ENCODE measurements at regions of chr16 and their contacts with region 1.

Region 1: DNA sequence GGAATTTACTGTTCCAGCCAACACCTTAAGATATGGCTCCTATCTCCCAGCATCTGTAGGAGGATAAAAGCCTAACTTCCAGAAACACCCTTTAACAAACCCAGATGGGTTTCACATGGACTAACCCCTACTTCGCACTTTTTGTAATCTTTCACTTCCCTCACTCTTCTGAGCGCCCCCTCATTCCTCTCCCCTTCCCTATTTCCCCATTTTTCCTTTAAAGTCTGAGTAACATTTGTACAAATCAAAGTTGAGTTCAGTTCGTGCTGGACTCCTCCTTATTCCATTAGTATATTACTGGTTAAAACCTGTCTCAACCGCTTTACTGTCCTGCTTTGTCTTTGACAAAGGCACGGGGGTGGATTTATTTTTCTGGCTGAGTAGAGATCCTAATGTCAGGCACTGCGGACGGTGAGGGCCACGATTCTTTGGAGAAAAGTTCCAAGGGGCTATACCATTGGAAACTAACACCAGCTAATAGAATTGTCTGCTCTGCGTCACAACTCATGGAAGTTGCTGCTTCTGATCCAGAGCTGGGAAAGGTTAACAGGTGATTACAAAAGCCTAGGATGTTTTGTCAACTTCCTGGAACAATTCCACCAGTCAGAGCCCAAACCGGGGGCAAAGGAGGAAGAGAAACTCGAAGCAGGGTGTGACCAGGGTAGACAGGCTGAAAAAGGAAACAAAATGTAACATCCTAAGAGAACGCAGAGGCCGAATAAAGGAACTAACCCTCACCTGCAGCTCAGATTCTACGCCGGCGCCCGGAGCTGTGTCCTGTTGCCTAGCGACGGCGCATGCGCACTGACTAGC is 12.5 kb downstream of the TAT start:
- DNase-seq: peak in 1 of 9 experiments; percentile 8
- ATAC-seq: no peak
- H3K4me3 ChIP-seq: peak overlapping the region; percentile 64 to 66
- H3K4me3 Mint-ChIP-seq: peak overlapping the region; percentile 91
- H3K27ac ChIP-seq: peak overlapping the region; percentile 72 to 73
- H3K27ac Mint-ChIP-seq: peak overlapping the region; percentile 94
- H3K4me1 ChIP-seq: peaks cover 11% of the 10 kb centered on the region
- H3K4me1 Mint-ChIP-seq: peaks cover 15% of the 10 kb centered on the region
- H3K27me3 ChIP-seq: no peaks in the 10 kb centered on the region
- H3K27me3 Mint-ChIP-seq: no peaks in the 10 kb centered on the region
- CTCF ChIP-seq: no peak

Region 2: DNA sequence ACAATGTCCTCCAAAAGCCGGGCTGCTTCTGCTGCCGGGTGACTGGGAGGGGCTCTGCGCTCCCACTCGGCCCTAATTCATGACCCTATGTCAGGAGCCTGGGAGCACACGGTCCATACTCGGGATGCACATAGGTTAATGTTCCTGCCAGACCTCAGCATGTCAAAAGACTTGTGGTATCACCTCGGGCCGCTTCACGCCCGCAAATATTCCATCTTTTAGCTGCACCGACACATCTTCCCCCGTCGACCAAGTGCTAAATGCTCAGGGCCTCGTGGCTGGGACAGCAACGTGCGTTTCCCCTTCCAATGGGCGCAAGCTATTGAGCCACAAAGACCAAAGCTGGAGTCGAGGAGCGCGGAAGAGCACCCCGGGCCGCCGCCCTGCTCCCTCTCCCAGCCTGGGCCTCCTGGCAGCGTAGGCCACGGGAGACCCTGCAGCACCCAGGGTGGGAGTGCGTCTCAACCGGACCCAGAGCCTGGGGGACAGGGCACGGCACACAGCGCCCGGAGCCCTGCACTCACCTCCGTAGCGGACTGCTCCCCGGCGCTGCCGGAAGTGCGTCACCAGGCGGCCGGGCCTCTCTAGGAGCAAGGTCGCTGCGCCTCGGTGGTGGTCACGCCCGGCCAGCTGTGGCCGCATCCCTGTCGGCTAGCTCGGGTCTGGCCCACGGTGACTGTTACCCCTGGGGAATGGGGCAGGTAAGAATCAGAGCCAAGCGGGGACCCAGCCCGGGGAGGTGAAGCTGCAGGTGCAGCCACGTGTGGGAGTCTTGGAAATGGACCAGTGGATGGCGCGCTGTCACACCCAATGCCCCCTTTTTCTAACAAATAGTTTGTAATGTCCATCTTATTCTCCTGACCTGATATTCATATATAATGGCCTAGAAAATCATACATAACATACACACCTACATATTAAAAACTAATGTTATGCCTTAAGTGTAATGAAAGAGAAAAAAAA is 102.4 kb before region 1 on chr16 and contains the start of gene ZNF23:
- CTCF ChIA-PET with region 1: no interaction called
- POLR2A ChIA-PET with region 1: no interaction called
- intact Hi-C with region 1: loop called in 1 of 2 experiments (anchors 1 kb)
- DNase-seq: peak; percentile 55 to 88 (median 79)
- ATAC-seq: peak; percentile 95
- H3K4me3 ChIP-seq: peak within 1 kb of the TSS; percentile 96 to 100
- H3K4me3 Mint-ChIP-seq: peak within 1 kb of the TSS; percentile 96
- H3K27ac ChIP-seq: peak within 1 kb of the TSS; percentile 92 to 93
- H3K27ac Mint-ChIP-seq: peak within 1 kb of the TSS; percentile 96
- H3K4me1 ChIP-seq: peaks cover 19% of the 10 kb centered on the region
- H3K4me1 Mint-ChIP-seq: peaks cover 32% of the 10 kb centered on the region
- H3K27me3 ChIP-seq: no peaks in the 10 kb centered on the region
- H3K27me3 Mint-ChIP-seq: no peaks in the 10 kb centered on the region
- CTCF ChIP-seq: peak; percentile 29
- total RNA-seq, gene ZNF23: 8.0 to 8.5 TPM

Region 3: GRCh38 chr16:71493213-71493612 is 71.1 kb before region 1 on chr16:
- CTCF ChIA-PET with region 1: no interaction called
- POLR2A ChIA-PET with region 1: no interaction called
- intact Hi-C with region 1: no loop called
- DNase-seq: no peak
- ATAC-seq: no peak
- H3K4me3 ChIP-seq: no peak overlapping the region
- H3K4me3 Mint-ChIP-seq: no peak overlapping the region
- H3K27ac ChIP-seq: no peak overlapping the region
- H3K27ac Mint-ChIP-seq: no peak overlapping the region
- H3K4me1 ChIP-seq: no peaks in the 10 kb centered on the region
- H3K4me1 Mint-ChIP-seq: no peaks in the 10 kb centered on the region
- H3K27me3 ChIP-seq: no peaks in the 10 kb centered on the region
- H3K27me3 Mint-ChIP-seq: no peaks in the 10 kb centered on the region
- CTCF ChIP-seq: no peak

Region 4: GRCh38 chr16:71594000-71594646 is 29.8 kb after region 1 on chr16:
- CTCF ChIA-PET with region 1: no interaction called
- POLR2A ChIA-PET with region 1: no interaction called
- intact Hi-C with region 1: no loop called
- DNase-seq: no peak
- ATAC-seq: no peak
- H3K4me3 ChIP-seq: no peak overlapping the region
- H3K4me3 Mint-ChIP-seq: no peak overlapping the region
- H3K27ac ChIP-seq: no peak overlapping the region
- H3K27ac Mint-ChIP-seq: no peak overlapping the region
- H3K4me1 ChIP-seq: no peaks in the 10 kb centered on the region
- H3K4me1 Mint-ChIP-seq: no peaks in the 10 kb centered on the region
- H3K27me3 ChIP-seq: no peaks in the 10 kb centered on the region
- H3K27me3 Mint-ChIP-seq: peaks cover 53% of the 10 kb centered on the region
- CTCF ChIP-seq: no peak

Region 5: DNA sequence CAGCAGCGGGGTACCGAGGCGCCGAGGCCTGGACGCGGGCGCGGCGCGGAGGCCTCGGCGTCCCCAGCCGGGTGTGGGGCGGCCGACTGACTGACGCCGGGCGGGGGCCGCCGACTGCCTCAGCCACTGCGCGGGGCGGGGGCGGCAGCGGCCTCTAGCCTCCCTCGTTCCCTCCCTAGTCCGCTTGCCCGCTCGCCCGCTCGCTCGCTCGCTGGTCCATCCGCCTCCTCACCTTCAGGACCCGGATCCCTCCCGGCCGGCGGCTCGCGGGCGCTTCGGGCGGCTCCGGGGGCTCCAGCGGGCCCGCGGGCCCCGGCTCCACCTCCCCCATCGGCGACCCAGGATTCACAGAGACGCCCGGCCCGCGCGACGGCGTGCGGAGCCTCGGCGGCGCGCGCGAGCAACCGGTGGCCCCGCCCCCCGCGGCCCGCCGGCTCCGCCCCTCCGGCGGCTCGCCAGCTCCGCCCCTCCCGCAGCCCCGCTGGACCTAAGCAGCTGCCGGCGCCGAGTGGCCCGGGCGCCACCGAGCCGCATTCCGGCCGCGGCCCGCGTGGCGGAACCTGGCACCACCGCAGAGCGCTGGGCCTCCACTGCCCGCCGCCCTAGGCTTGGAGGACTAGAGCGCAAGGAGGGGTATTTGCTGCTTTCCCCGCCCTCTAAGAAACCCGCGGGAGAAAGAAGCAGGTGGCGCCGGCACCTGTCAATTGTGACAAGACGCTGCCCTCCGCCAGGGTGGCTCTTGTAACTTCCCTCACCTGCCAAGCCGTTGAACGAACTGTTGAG is 159.4 kb after region 1 on chr16:
- CTCF ChIA-PET with region 1: no interaction called
- POLR2A ChIA-PET with region 1: interaction called, 4 read pairs
- intact Hi-C with region 1: loop called in 1 of 2 experiments (anchors 2 kb)
- DNase-seq: peak; percentile 61 to 90 (median 79)
- ATAC-seq: peak; percentile 82
- H3K4me3 ChIP-seq: peak overlapping the region; percentile 48 to 73
- H3K4me3 Mint-ChIP-seq: peak overlapping the region; percentile 79
- H3K27ac ChIP-seq: peak overlapping the region in 1 of 2 experiments; percentile 69
- H3K27ac Mint-ChIP-seq: peak overlapping the region; percentile 67
- H3K4me1 ChIP-seq: peaks cover 14% of the 10 kb centered on the region
- H3K4me1 Mint-ChIP-seq: peaks cover 15% of the 10 kb centered on the region
- H3K27me3 ChIP-seq: no peaks in the 10 kb centered on the region
- H3K27me3 Mint-ChIP-seq: no peaks in the 10 kb centered on the region
- CTCF ChIP-seq: no peak

Region 6: GRCh38 chr16:71883849-71884638 is 319.7 kb after region 1 on chr16 and contains the start of gene ZNF821:
- CTCF ChIA-PET with region 1: interaction called, 4 read pairs
- POLR2A ChIA-PET with region 1: no interaction called
- intact Hi-C with region 1: loop called in 1 of 2 experiments (anchors 10 kb)
- DNase-seq: peak; percentile 48 to 92 (median 72)
- ATAC-seq: peak; percentile 48
- H3K4me3 ChIP-seq: peak within 1 kb of the TSS; percentile 80 to 81
- H3K4me3 Mint-ChIP-seq: peak within 1 kb of the TSS; percentile 94
- H3K27ac ChIP-seq: peak within 1 kb of the TSS; percentile 47 to 83
- H3K27ac Mint-ChIP-seq: peak within 1 kb of the TSS; percentile 95
- H3K4me1 ChIP-seq: peaks cover 39% of the 10 kb centered on the region
- H3K4me1 Mint-ChIP-seq: peaks cover 51% of the 10 kb centered on the region
- H3K27me3 ChIP-seq: no peaks in the 10 kb centered on the region
- H3K27me3 Mint-ChIP-seq: no peaks in the 10 kb centered on the region
- CTCF ChIP-seq: no peak
- total RNA-seq, gene ZNF821: 8.4 to 10.1 TPM

Region 7: DNA sequence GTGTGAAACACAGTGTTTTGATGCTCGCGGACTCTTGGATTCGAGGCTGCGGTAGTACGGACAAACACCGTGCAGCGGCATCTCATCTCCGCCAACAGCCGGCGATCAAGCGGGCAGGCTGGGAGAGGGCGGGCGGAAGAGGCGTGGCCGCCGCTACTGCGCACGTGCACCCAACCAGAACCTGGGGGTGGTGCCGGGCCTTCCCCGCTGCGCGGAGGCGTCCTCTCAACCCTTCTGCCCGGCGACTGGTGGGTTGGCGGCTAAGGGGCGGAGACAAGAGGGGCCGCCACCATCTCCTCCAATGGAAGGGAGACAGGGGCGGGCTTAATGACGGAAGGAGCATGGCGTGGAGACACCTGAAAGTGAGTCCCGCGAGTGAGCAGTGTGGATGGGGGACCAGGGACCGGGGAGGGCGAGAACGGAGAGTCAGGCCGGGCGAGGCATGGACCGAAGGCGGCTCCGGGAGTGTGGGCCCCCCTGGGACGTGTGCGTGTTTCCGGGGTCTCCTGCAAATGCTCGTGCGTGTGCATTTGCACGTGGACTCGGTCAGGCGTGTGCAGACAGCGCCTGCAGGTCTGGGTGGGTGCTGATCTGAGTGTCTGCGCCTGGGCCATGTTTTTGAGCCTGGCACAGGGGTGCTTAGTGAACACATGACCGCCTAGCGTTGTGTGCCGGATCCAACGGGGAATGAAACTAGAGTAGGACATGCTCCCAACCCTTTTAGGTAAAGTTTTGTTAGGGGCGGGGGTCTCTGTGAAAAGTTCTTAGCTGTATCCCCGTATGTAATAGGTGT is 444.3 kb after region 1 on chr16 and contains the start of gene DHODH:
- CTCF ChIA-PET with region 1: no interaction called
- POLR2A ChIA-PET with region 1: no interaction called
- intact Hi-C with region 1: loop called in 1 of 2 experiments (anchors 1 kb)
- DNase-seq: peak; percentile 94 to 99 (median 97)
- ATAC-seq: peak; percentile 98
- H3K4me3 ChIP-seq: peak within 1 kb of the TSS; percentile 87 to 90
- H3K4me3 Mint-ChIP-seq: peak within 1 kb of the TSS; percentile 91
- H3K27ac ChIP-seq: peak within 1 kb of the TSS; percentile 41 to 66
- H3K27ac Mint-ChIP-seq: peak within 1 kb of the TSS; percentile 76
- H3K4me1 ChIP-seq: no peaks in the 10 kb centered on the region
- H3K4me1 Mint-ChIP-seq: peaks cover 20% of the 10 kb centered on the region
- H3K27me3 ChIP-seq: no peaks in the 10 kb centered on the region
- H3K27me3 Mint-ChIP-seq: no peaks in the 10 kb centered on the region
- CTCF ChIP-seq: no peak
- total RNA-seq, gene DHODH: 2.4 to 3.0 TPM

Region 8: GRCh38 chr16:72637306-72637705 is 1072.9 kb after region 1 on chr16:
- CTCF ChIA-PET with region 1: no interaction called
- POLR2A ChIA-PET with region 1: no interaction called
- intact Hi-C with region 1: no loop called
- DNase-seq: no peak
- ATAC-seq: no peak
- H3K4me3 ChIP-seq: no peak overlapping the region
- H3K4me3 Mint-ChIP-seq: no peak overlapping the region
- H3K27ac ChIP-seq: no peak overlapping the region
- H3K27ac Mint-ChIP-seq: no peak overlapping the region
- H3K4me1 ChIP-seq: no peaks in the 10 kb centered on the region
- H3K4me1 Mint-ChIP-seq: peaks cover 1% of the 10 kb centered on the region
- H3K27me3 ChIP-seq: peaks cover 0 to 2% of the 10 kb centered on the region in 2 experiments
- H3K27me3 Mint-ChIP-seq: no peaks in the 10 kb centered on the region
- CTCF ChIP-seq: no peak

Measured in CD8-positive, alpha-beta T cell (primary cell).